ENCODE measurements at regions of chr19 and their contacts with region 1.

Region 1: DNA sequence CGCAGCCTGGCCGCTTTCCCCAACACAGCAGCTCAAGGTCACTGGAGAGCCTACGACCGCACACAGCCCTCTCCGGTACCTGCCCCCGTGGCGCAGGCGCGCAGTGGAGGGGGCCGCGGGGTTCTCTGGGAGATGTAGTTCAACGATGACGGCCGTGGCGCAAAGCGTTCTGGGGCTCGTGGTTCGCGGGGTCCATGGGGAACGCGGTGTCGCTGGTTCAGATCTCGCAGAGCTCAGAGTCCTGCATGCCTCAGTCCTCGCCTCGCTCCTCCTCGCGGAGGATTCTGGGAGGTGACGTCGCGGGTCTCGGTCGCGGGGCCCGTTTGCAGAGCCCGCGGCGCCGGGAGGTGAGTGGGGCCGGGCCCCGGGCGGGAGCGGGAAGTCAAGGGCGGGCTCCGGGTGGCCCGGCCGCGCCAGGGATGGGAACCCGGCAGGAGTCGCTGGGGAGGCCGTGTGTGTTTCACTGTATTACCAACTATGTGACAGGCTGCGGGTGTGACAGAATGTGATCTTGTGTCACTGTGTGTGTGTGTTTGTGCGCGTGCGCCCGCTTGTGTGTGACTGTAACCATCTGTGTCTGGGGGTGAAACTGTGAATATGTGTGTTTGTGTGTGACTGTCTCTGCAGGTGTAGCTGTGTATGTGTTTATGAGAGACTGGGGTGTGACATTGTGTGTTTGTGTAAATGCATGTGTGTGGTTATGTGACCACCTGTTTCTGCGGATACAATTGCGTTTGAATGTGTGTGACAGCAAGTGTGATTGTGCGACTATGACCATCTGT is at the start of gene ZNF527:
- DNase-seq: peak; percentile 92 to 97 (median 96)
- ATAC-seq: peak; percentile 96
- H3K4me3 ChIP-seq: peak within 1 kb of the TSS; percentile 85
- H3K4me3 Mint-ChIP-seq: peak within 1 kb of the TSS; percentile 92 to 100 (median 98)
- H3K27ac ChIP-seq: peak within 1 kb of the TSS; percentile 74
- H3K27ac Mint-ChIP-seq: peak within 1 kb of the TSS; percentile 87 to 99 (median 97)
- H3K4me1 ChIP-seq: peaks cover 0 to 8% of the 10 kb centered on the region in 2 donors
- H3K4me1 Mint-ChIP-seq: peaks cover 7 to 25% (median 17%) of the 10 kb centered on the region in 7 donors
- H3K27me3 ChIP-seq: no peaks in the 10 kb centered on the region
- H3K27me3 Mint-ChIP-seq: no peaks in the 10 kb centered on the region
- total RNA-seq, gene ZNF527: 5.6 to 13.6 (median 13.2) TPM

Region 2: DNA sequence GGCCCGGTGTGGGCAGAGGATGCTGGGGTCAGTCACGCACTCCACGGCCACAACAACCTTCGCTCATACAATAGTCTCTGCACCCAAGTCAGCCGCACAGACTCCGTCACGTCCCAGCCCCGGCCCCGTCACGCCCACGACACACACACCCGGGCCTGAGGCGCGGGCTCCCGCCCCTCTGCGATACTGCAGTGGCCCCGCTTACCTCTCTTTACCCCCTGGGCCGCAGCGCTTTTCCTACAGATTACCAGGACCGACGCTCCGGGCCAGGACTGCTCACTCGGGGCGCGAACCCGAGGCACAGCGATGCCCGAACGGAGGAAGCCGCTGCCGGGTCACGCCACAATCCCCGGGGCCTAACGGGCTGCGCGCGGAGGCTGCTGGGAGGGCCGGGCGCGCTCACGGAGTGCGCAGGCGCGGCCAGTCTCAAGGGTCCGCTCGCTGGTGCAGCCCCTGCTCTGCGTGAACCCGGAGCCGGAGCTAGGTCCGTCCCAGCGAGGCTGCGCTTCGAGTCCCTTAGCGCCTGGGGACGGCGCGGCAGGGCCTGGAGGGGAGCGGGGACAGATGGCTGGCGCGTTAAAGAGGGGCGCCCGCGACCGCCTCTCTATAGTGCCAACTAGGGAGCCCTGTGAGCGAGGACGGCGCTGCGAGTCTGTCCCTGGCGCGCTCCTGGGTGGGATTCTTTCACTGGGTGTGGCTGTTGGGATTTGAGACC is 952.6 kb before region 1 on chr19 and contains the start of gene ZFP82:
- CTCF ChIA-PET with region 1: no interaction called
- POLR2A ChIA-PET with region 1: no interaction called
- intact Hi-C with region 1: loop called in 1 of 2 experiments (anchors 1 kb)
- DNase-seq: peak; percentile 47 to 83 (median 76)
- ATAC-seq: peak; percentile 94
- H3K4me3 ChIP-seq: peak within 1 kb of the TSS; percentile 82
- H3K4me3 Mint-ChIP-seq: peak within 1 kb of the TSS; percentile 89 to 96 (median 93)
- H3K27ac ChIP-seq: peak within 1 kb of the TSS; percentile 83
- H3K27ac Mint-ChIP-seq: peak within 1 kb of the TSS; percentile 82 to 95 (median 91)
- H3K4me1 ChIP-seq: peaks cover 6 to 13% of the 10 kb centered on the region in 2 donors
- H3K4me1 Mint-ChIP-seq: peaks cover 10 to 36% (median 21%) of the 10 kb centered on the region in 7 donors
- H3K27me3 ChIP-seq: peaks cover 0 to 9% of the 10 kb centered on the region in 2 donors
- H3K27me3 Mint-ChIP-seq: peaks cover 14 to 23% (median 22%) of the 10 kb centered on the region in 5 donors
- total RNA-seq, gene ZFP82: 2.2 to 8.2 (median 5.7) TPM

Region 3: GRCh38 chr19:36665832-36666231 is 705.2 kb before region 1 on chr19:
- CTCF ChIA-PET with region 1: no interaction called
- POLR2A ChIA-PET with region 1: no interaction called
- intact Hi-C with region 1: loop called in 1 of 2 experiments (anchors 10 kb)
- DNase-seq: peak in 1 of 9 donors; percentile 2
- ATAC-seq: no peak
- H3K4me3 ChIP-seq: peak overlapping the region; percentile 88
- H3K4me3 Mint-ChIP-seq: peak overlapping the region; percentile 91 to 100 (median 98)
- H3K27ac ChIP-seq: no peak overlapping the region
- H3K27ac Mint-ChIP-seq: peak overlapping the region; percentile 29 to 99 (median 93)
- H3K4me1 ChIP-seq: peaks cover 0 to 10% of the 10 kb centered on the region in 2 donors
- H3K4me1 Mint-ChIP-seq: peaks cover 17 to 42% (median 35%) of the 10 kb centered on the region in 7 donors
- H3K27me3 ChIP-seq: no peaks in the 10 kb centered on the region
- H3K27me3 Mint-ChIP-seq: no peaks in the 10 kb centered on the region

Region 4: GRCh38 chr19:36850559-36851442 is 520.3 kb before region 1 on chr19 and contains the start of gene ZNF345:
- CTCF ChIA-PET with region 1: no interaction called
- POLR2A ChIA-PET with region 1: interaction called, 7 read pairs
- intact Hi-C with region 1: loop called (anchors 1 to 2 kb)
- DNase-seq: peak; percentile 62 to 91 (median 88)
- ATAC-seq: peak; percentile 93
- H3K4me3 ChIP-seq: peak within 1 kb of the TSS; percentile 92
- H3K4me3 Mint-ChIP-seq: no peak within 1 kb of the TSS
- H3K27ac ChIP-seq: peak within 1 kb of the TSS; percentile 86
- H3K27ac Mint-ChIP-seq: no peak within 1 kb of the TSS
- H3K4me1 ChIP-seq: peaks cover 9 to 16% of the 10 kb centered on the region in 2 donors
- H3K4me1 Mint-ChIP-seq: peaks cover 0 to 22% (median 13%) of the 10 kb centered on the region in 7 donors
- H3K27me3 ChIP-seq: no peaks in the 10 kb centered on the region
- H3K27me3 Mint-ChIP-seq: no peaks in the 10 kb centered on the region
- total RNA-seq, gene ZNF345: 6.8 to 18.2 (median 7.8) TPM

Region 5: GRCh38 chr19:37303591-37304550 is 67.2 kb before region 1 on chr19:
- CTCF ChIA-PET with region 1: no interaction called
- POLR2A ChIA-PET with region 1: no interaction called
- intact Hi-C with region 1: no loop called
- DNase-seq: no peak
- ATAC-seq: no peak
- H3K4me3 ChIP-seq: no peak overlapping the region
- H3K4me3 Mint-ChIP-seq: peak overlapping the region in 5 of 10 donors; percentile 18 to 47 (median 23)
- H3K27ac ChIP-seq: no peak overlapping the region
- H3K27ac Mint-ChIP-seq: no peak overlapping the region
- H3K4me1 ChIP-seq: no peaks in the 10 kb centered on the region
- H3K4me1 Mint-ChIP-seq: peaks cover 0 to 4% (median 0%) of the 10 kb centered on the region in 7 donors
- H3K27me3 ChIP-seq: no peaks in the 10 kb centered on the region
- H3K27me3 Mint-ChIP-seq: peaks cover 0 to 6% (median 5%) of the 10 kb centered on the region in 5 donors

Region 6: DNA sequence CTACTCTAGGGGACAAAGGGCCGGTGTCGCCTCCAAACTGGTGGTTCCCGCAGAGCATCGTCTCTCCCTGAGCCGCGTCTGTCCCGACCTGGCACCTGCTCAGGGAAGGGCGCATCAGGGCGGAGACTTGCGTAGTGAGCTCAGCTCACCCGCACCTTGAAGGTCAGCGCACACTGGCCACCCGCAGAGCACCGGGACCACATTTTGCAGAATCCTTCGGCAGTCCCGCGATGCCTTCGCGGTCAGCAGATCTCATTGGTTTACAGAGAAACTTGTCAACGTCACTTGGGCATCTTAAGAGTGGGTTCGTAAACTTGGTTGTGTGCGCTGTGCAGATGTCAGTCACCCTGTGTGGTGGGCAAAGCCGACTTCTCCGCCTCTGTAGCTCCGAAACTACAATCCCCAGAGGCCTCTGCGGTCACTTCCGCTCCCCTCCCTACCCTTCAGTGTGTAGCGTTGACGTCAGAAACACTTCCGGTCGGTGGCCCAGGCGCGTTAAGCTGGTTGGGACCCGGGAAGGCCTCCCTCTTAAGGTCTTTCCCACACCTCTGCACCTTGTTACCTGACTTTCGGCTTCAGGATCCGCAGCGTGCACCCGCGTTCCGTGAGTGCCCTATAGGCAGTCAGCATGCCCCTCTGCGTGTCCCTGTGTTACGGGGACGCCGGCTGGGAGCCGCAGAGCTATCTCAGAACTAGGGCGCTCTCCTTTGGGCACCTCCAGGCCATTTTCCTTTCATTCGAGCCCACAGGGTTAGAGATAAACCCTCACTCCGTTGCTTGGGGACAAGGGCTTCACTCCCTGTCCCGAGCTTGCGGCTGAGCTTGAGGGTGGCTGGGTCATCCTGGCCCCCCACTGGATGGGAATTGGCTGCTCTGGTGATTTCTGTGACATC is 36.6 kb before region 1 on chr19:
- CTCF ChIA-PET with region 1: no interaction called
- POLR2A ChIA-PET with region 1: interaction called, 16 read pairs
- intact Hi-C with region 1: loop called (anchors 1 kb)
- DNase-seq: peak; percentile 52 to 93 (median 84)
- ATAC-seq: peak; percentile 99
- H3K4me3 ChIP-seq: peak overlapping the region; percentile 69
- H3K4me3 Mint-ChIP-seq: peak overlapping the region; percentile 82 to 93 (median 90)
- H3K27ac ChIP-seq: peak overlapping the region; percentile 88
- H3K27ac Mint-ChIP-seq: peak overlapping the region; percentile 77 to 97 (median 93)
- H3K4me1 ChIP-seq: peaks cover 6 to 10% of the 10 kb centered on the region in 2 donors
- H3K4me1 Mint-ChIP-seq: peaks cover 9 to 47% (median 33%) of the 10 kb centered on the region in 7 donors
- H3K27me3 ChIP-seq: no peaks in the 10 kb centered on the region
- H3K27me3 Mint-ChIP-seq: no peaks in the 10 kb centered on the region

Region 7: GRCh38 chr19:37572203-37572602 is 201.1 kb after region 1 on chr19:
- CTCF ChIA-PET with region 1: no interaction called
- POLR2A ChIA-PET with region 1: no interaction called
- intact Hi-C with region 1: no loop called
- DNase-seq: no peak
- ATAC-seq: no peak
- H3K4me3 ChIP-seq: no peak overlapping the region
- H3K4me3 Mint-ChIP-seq: no peak overlapping the region
- H3K27ac ChIP-seq: no peak overlapping the region
- H3K27ac Mint-ChIP-seq: no peak overlapping the region
- H3K4me1 ChIP-seq: no peaks in the 10 kb centered on the region
- H3K4me1 Mint-ChIP-seq: no peaks in the 10 kb centered on the region
- H3K27me3 ChIP-seq: no peaks in the 10 kb centered on the region
- H3K27me3 Mint-ChIP-seq: no peaks in the 10 kb centered on the region

Region 8: GRCh38 chr19:37594304-37594981 is 223.4 kb after region 1 on chr19 and contains the starts of genes ZNF540 and ZNF571:
- CTCF ChIA-PET with region 1: no interaction called
- POLR2A ChIA-PET with region 1: interaction called, 5 read pairs
- intact Hi-C with region 1: loop called (anchors 1 kb)
- DNase-seq: peak; percentile 70 to 95 (median 92)
- ATAC-seq: peak; percentile 96
- H3K4me3 ChIP-seq: peak within 1 kb of the TSS; percentile 80
- H3K4me3 Mint-ChIP-seq: peak within 1 kb of the TSS; percentile 94 to 100 (median 98)
- H3K27ac ChIP-seq: peak within 1 kb of the TSS; percentile 93
- H3K27ac Mint-ChIP-seq: peak within 1 kb of the TSS; percentile 93 to 100 (median 99)
- H3K4me1 ChIP-seq: peaks cover 7 to 18% of the 10 kb centered on the region in 2 donors
- H3K4me1 Mint-ChIP-seq: peaks cover 13 to 56% (median 39%) of the 10 kb centered on the region in 7 donors
- H3K27me3 ChIP-seq: no peaks in the 10 kb centered on the region
- H3K27me3 Mint-ChIP-seq: no peaks in the 10 kb centered on the region
- total RNA-seq, gene ZNF540: 0.99 to 22.7 (median 17.6) TPM
- total RNA-seq, gene ZNF571: 1.5 to 12.4 (median 9.0) TPM

Region 9: GRCh38 chr19:37779127-37780005 is 408.3 kb after region 1 on chr19 and contains the start of gene ZNF573:
- CTCF ChIA-PET with region 1: no interaction called
- POLR2A ChIA-PET with region 1: interaction called, 3 read pairs
- intact Hi-C with region 1: loop called (anchors 1 to 2 kb)
- DNase-seq: peak; percentile 62 to 99 (median 94)
- ATAC-seq: peak; percentile 94
- H3K4me3 ChIP-seq: peak within 1 kb of the TSS; percentile 82
- H3K4me3 Mint-ChIP-seq: peak within 1 kb of the TSS; percentile 91 to 98 (median 96)
- H3K27ac ChIP-seq: peak within 1 kb of the TSS; percentile 99
- H3K27ac Mint-ChIP-seq: peak within 1 kb of the TSS; percentile 89 to 100 (median 98)
- H3K4me1 ChIP-seq: peaks cover 6% of the 10 kb centered on the region in 2 donors
- H3K4me1 Mint-ChIP-seq: peaks cover 9 to 53% (median 48%) of the 10 kb centered on the region in 7 donors
- H3K27me3 ChIP-seq: no peaks in the 10 kb centered on the region
- H3K27me3 Mint-ChIP-seq: no peaks in the 10 kb centered on the region
- total RNA-seq, gene ZNF573: 5.9 to 43.8 (median 16.6) TPM